Panc1 (cell line): ENCODE measurements at regions of chr2 and their contacts with region 1.

Region 1: GRCh38 chr2:65227425-65228262 is at the start of gene ACTR2:
- DNase-seq: peak; percentile 83
- ATAC-seq: peak; percentile 97
- H3K4me3 ChIP-seq: peak within 1 kb of the TSS; percentile 84 to 94
- H3K27ac ChIP-seq: peak within 1 kb of the TSS; percentile 97
- H3K4me1 ChIP-seq: peaks cover 32% of the 10 kb centered on the region
- H3K27me3 ChIP-seq: no peaks in the 10 kb centered on the region
- CTCF ChIP-seq: no peak
- total RNA-seq, gene ACTR2: 347 TPM

Region 2: GRCh38 chr2:65056215-65057053 is 171.2 kb before region 1 on chr2 and contains the start of gene CEP68:
- CTCF ChIA-PET with region 1: no interaction called
- POLR2A ChIA-PET with region 1: interaction called, 12 read pairs
- in situ Hi-C with region 1: no loop called
- intact Hi-C with region 1: no loop called
- DNase-seq: peak; percentile 87
- ATAC-seq: peak; percentile 99
- H3K4me3 ChIP-seq: peak within 1 kb of the TSS; percentile 79
- H3K27ac ChIP-seq: peak within 1 kb of the TSS; percentile 78
- H3K4me1 ChIP-seq: peaks cover 13% of the 10 kb centered on the region
- H3K27me3 ChIP-seq: no peaks in the 10 kb centered on the region
- CTCF ChIP-seq: no peak
- total RNA-seq, gene CEP68: 13.3 TPM

Region 3: GRCh38 chr2:65129826-65130663 is 97.6 kb before region 1 on chr2 and contains the start of gene RAB1A:
- CTCF ChIA-PET with region 1: interaction called, 6 read pairs
- POLR2A ChIA-PET with region 1: interaction called, 12 read pairs
- in situ Hi-C with region 1: no loop called
- intact Hi-C with region 1: no loop called
- DNase-seq: peak; percentile 97
- ATAC-seq: peak; percentile 97
- H3K4me3 ChIP-seq: peak within 1 kb of the TSS; percentile 83 to 91
- H3K27ac ChIP-seq: peak within 1 kb of the TSS; percentile 86
- H3K4me1 ChIP-seq: peaks cover 18% of the 10 kb centered on the region
- H3K27me3 ChIP-seq: no peaks in the 10 kb centered on the region
- CTCF ChIP-seq: no peak
- total RNA-seq, gene RAB1A: 128 TPM

Region 4: DNA sequence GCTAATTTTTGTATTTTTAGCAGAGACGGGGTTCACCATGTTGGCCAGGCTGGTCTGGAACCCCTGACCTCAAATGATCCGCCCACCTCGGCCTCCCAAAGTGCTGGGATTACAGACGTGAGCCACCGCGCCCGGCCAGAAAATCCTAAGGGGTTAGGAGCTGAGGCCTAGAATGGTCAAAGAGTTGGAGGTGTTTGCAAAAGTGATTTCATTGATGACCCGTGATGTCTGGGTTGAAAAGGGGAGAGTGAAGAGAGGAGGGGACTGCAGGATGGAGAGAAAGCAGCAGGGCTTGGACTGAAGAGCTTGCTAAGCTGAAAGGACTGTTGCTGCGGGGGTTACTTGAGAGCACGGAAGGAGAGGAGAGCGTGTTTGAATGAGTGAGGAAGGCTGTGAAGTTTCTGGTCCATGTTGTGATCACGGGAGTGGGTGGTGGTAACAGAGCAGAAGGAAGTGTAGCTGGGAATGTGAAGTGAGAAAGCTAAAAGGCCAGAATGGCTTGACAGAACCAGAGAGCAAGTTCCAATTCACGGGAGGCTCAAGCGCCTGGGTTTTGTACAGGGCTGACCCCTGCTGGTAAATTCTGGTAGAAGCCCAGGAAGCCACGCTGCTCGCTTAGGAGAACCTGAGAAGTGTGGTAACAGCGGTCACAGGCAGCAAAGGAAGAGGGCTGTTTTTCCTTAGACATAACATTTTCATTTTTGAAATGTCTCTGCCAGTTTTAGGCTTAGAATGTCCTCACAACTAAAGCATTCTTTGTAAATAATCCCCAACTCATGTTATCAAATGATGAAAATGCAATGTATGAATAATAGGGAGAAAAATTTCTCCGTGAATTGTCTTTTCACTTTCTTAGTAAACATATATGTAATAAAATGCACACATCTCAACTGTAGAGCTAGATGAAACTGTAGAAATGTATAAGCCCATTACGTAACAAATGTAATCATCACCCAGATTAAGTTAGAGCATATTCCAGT is 40.5 kb before region 1 on chr2:
- CTCF ChIA-PET with region 1: no interaction called
- POLR2A ChIA-PET with region 1: interaction called, 10 read pairs
- in situ Hi-C with region 1: no loop called
- intact Hi-C with region 1: no loop called
- DNase-seq: peak; percentile 69
- ATAC-seq: peak; percentile 98
- H3K4me3 ChIP-seq: no peak overlapping the region
- H3K27ac ChIP-seq: no peak overlapping the region
- H3K4me1 ChIP-seq: no peaks in the 10 kb centered on the region
- H3K27me3 ChIP-seq: peaks cover 6% of the 10 kb centered on the region; the same call in 1 of the 2 replicates
- CTCF ChIP-seq: peak; percentile 94

Region 5: GRCh38 chr2:65193446-65193845 is 34.2 kb before region 1 on chr2:
- CTCF ChIA-PET with region 1: no interaction called
- POLR2A ChIA-PET with region 1: interaction called, 10 read pairs
- in situ Hi-C with region 1: no loop called
- intact Hi-C with region 1: no loop called
- DNase-seq: no peak
- ATAC-seq: no peak
- H3K4me3 ChIP-seq: no peak overlapping the region
- H3K27ac ChIP-seq: no peak overlapping the region
- H3K4me1 ChIP-seq: no peaks in the 10 kb centered on the region
- H3K27me3 ChIP-seq: peaks cover 4% of the 10 kb centered on the region; the same call in 1 of the 2 replicates
- CTCF ChIP-seq: no peak

Region 6: GRCh38 chr2:65402323-65402722 is 174.7 kb after region 1 on chr2:
- CTCF ChIA-PET with region 1: no interaction called
- POLR2A ChIA-PET with region 1: interaction called, 13 read pairs
- in situ Hi-C with region 1: no loop called
- intact Hi-C with region 1: no loop called
- DNase-seq: no peak
- ATAC-seq: no peak; the same call in 1 of the 2 replicates
- H3K4me3 ChIP-seq: no peak overlapping the region
- H3K27ac ChIP-seq: no peak overlapping the region
- H3K4me1 ChIP-seq: peaks cover 41% of the 10 kb centered on the region
- H3K27me3 ChIP-seq: no peaks in the 10 kb centered on the region
- CTCF ChIP-seq: no peak

Region 7: GRCh38 chr2:65576861-65577601 is 349.4 kb after region 1 on chr2:
- CTCF ChIA-PET with region 1: no interaction called
- POLR2A ChIA-PET with region 1: interaction called, 11 read pairs
- in situ Hi-C with region 1: no loop called
- intact Hi-C with region 1: no loop called
- DNase-seq: peak; percentile 84
- ATAC-seq: peak; percentile 90
- H3K4me3 ChIP-seq: peak overlapping the region in 1 of 2 experiments; percentile 1; a peak in 1 of 4 replicates
- H3K27ac ChIP-seq: peak overlapping the region; percentile 67
- H3K4me1 ChIP-seq: peaks cover 14% of the 10 kb centered on the region
- H3K27me3 ChIP-seq: no peaks in the 10 kb centered on the region
- CTCF ChIP-seq: no peak